Activated CD4-positive, alpha-beta T cell treated with anti-CD3 and anti-CD28 coated beads, Interleukin-2, amount 10 ng/mL, durations not matched to agents 24 days and 14 days (primary cell): ENCODE measurements at regions of chr2 and their contacts with region 1.

Region 1: GRCh38 chr2:44237221-44237620 is 38.1 kb upstream of the SLC3A1 start:
- DNase-seq: peak; percentile 81
- H3K4me3 Mint-ChIP-seq: peak overlapping the region; percentile 27
- H3K27ac Mint-ChIP-seq: no peak overlapping the region
- H3K4me1 Mint-ChIP-seq: peaks cover 14% of the 10 kb centered on the region
- H3K27me3 Mint-ChIP-seq: no peaks in the 10 kb centered on the region

Region 2: GRCh38 chr2:43941966-43942365 is 295.3 kb before region 1 on chr2:
- intact Hi-C with region 1: no loop called
- DNase-seq: no peak
- H3K4me3 Mint-ChIP-seq: no peak overlapping the region
- H3K27ac Mint-ChIP-seq: no peak overlapping the region
- H3K4me1 Mint-ChIP-seq: no peaks in the 10 kb centered on the region
- H3K27me3 Mint-ChIP-seq: no peaks in the 10 kb centered on the region

Region 3: GRCh38 chr2:44361330-44362206 is 124.3 kb after region 1 on chr2 and contains the starts of genes CAMKMT and PREPL:
- intact Hi-C with region 1: loop called (anchors 5 kb)
- DNase-seq: peak; percentile 99
- H3K4me3 Mint-ChIP-seq: peak within 1 kb of the TSS; percentile 89
- H3K27ac Mint-ChIP-seq: peak within 1 kb of the TSS; percentile 100
- H3K4me1 Mint-ChIP-seq: peaks cover 31% of the 10 kb centered on the region
- H3K27me3 Mint-ChIP-seq: peaks cover 2% of the 10 kb centered on the region
- total RNA-seq, gene CAMKMT: 13.1 and 16.2 TPM in 2 replicates
- total RNA-seq, gene PREPL: 32.7 and 33.3 TPM in 2 replicates

Region 4: GRCh38 chr2:44429034-44429433 is 191.8 kb after region 1 on chr2:
- intact Hi-C with region 1: no loop called
- DNase-seq: no peak
- H3K4me3 Mint-ChIP-seq: no peak overlapping the region
- H3K27ac Mint-ChIP-seq: no peak overlapping the region
- H3K4me1 Mint-ChIP-seq: no peaks in the 10 kb centered on the region
- H3K27me3 Mint-ChIP-seq: no peaks in the 10 kb centered on the region